OCI-LY7 (cell line): ENCODE measurements at regions of chr13 and their contacts with region 1.

Region 1: DNA sequence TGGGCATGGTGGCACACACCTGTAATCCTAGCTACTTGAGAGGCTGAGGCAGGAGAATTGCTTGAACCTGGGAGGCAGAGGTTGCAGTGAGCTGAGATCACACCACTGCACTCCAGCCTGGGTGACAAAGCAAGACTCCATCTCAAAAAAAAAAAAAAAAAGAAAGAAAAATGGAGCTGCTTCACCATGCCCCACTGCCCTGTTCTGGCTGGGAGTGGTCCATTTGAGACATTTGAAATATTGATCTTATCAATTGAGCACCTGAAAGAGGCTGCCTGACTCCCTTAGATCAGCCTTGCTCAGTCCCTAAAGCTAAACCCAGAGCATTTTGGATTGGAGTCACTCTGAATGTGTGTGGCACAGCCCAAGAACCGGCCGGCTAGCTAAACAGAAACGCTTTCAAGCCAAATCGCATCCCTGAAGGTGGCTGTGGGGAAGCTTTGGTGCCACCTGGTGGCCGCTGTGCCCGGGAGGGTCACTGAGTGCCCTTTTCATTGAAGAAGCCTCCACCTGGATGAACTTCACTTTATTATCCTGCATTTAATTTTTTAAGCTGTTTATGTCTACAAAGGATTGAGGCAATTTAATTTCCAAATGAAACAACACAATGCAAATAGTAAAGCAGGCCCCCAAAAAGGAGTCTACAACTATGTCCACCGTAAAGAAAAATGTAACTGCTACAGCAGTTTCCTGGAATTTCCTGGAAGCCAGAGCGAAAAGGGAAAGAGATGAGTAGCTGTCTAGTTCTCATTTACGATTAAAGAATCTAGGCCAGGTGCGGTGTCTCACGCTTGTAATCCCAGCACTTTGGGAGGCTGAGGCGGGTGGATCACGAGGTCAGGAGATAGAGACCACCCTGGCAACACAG is 53.1 kb upstream of the SERPINE3 start:
- DNase-seq: peak; percentile 78
- H3K4me3 ChIP-seq: no peak overlapping the region
- H3K27ac ChIP-seq: no peak overlapping the region
- H3K4me1 ChIP-seq: no peaks in the 10 kb centered on the region
- CTCF ChIP-seq: peak; percentile 98

Region 2: DNA sequence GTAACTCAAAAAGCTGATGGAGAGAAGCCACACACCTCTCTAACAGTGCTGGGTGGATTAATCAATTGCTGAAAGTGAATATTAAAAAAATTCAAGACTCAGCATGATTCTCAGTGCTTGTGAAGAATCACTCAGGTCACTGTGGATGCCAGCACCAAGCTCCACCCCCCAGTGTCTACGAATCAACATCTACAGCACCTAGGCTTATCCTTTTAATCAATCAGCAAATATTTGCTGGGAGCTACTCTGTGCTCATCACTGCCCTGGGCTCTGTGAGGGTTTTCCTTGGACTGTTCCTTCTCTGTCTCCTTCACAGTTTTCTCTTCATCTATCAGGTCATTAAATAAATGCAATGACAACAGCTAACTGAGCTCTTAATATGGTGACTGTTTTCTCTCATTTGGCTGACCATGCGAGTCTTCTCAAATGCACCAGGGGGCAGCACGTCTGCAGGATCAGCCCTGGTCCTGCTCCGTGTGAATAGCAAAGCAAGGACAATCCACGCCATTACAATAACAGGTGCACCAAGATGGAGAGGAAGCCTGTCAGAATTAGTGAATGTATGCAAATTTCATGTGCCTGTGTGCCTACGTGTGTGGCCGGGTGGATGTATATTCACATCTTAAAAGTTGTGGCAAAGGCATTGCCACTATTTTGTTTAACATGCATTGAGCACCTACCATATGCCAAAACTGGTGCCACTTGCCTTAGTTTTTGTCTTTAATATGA is 160.7 kb before region 1 on chr13:
- CTCF ChIA-PET with region 1: interaction called, 18 read pairs
- POLR2A ChIA-PET with region 1: interaction called, 4 read pairs
- intact Hi-C with region 1: loop called (anchors 1 kb)
- DNase-seq: peak; percentile 76
- H3K4me3 ChIP-seq: no peak overlapping the region
- H3K27ac ChIP-seq: no peak overlapping the region
- H3K4me1 ChIP-seq: no peaks in the 10 kb centered on the region
- CTCF ChIP-seq: peak; percentile 92

Region 3: DNA sequence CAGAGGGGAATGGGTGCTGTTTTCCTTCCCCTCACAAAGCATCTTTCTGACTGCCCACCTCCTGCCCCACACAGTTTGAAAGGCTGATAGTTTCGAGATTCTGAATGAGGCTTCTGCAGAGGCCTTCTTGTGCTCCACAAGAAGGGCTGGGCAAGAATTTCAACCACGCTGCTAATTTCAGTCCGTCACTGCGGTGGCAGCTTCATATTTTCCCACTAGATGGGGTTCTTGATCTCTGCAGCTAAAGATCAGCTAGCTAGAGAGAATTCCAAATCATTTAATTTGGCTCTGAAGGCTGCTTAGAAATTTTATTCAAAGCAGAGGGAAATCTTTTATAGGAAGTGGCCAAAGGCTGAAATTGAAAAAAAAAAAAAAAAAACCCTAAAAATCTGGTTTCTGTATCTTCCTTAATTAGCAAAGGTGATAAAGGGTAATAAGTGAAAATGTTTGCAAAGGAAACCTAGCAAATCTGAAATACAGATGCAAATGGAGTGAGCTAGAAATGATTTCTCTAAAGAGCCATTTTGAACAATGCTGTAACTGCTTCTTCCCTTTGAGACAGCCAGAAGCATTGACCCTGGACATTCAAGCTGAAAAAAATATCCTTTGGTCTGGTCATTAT is 137.3 kb before region 1 on chr13:
- CTCF ChIA-PET with region 1: interaction called, 4 read pairs
- POLR2A ChIA-PET with region 1: interaction called, 3 read pairs
- intact Hi-C with region 1: loop called (anchors 1 kb)
- DNase-seq: peak; percentile 16
- H3K4me3 ChIP-seq: no peak overlapping the region
- H3K27ac ChIP-seq: no peak overlapping the region
- H3K4me1 ChIP-seq: no peaks in the 10 kb centered on the region
- CTCF ChIP-seq: peak; percentile 68

Region 4: DNA sequence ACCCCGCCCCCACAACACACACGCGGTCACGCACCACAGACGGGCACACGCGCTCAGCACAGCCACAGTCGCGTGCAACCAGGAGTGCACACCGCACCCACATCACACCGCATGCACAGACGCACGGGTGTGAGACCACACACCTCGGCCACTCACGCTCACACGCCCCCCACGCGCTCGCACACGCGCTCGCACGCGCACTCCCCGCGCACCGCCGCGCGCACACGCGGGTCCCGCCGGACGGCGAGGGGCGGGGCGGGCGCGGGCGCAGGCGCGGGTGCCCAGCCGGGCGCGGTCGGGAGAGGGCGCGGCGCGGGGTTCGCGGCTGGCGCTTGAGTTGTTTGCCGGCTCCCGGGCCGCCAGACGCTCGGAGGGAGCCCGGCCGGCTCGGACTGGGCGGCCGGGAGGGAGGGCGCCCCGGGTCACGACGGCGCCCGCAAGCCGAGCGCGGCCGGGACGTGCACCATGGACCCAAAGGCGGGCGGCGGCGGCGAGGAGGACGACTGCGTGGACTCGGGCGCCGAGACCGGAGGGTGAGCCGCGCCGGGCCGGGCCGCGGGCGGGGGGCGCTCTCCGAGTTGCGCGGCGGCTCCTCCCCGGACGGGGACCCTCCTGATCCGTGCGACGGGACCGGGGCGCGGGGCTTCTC is 64.2 kb before region 1 on chr13 and contains the start of gene FAM124A:
- CTCF ChIA-PET with region 1: no interaction called
- POLR2A ChIA-PET with region 1: no interaction called
- intact Hi-C with region 1: loop called (anchors 5 kb)
- DNase-seq: peak; percentile 43
- H3K4me3 ChIP-seq: peak within 1 kb of the TSS; percentile 68
- H3K27ac ChIP-seq: no peak within 1 kb of the TSS
- H3K4me1 ChIP-seq: peaks cover 5% of the 10 kb centered on the region
- CTCF ChIP-seq: 0 out of 2 replicates have a peak, but pooled peaks have one; percentile 16
- total RNA-seq, gene FAM124A: not detected in 2 replicates

Region 5: GRCh38 chr13:51308781-51309180 is 22.4 kb after region 1 on chr13:
- CTCF ChIA-PET with region 1: no interaction called
- POLR2A ChIA-PET with region 1: interaction called, 11 read pairs
- intact Hi-C with region 1: no loop called
- DNase-seq: no peak
- H3K4me3 ChIP-seq: no peak overlapping the region
- H3K27ac ChIP-seq: no peak overlapping the region
- H3K4me1 ChIP-seq: no peaks in the 10 kb centered on the region
- CTCF ChIP-seq: no peak

Region 6: DNA sequence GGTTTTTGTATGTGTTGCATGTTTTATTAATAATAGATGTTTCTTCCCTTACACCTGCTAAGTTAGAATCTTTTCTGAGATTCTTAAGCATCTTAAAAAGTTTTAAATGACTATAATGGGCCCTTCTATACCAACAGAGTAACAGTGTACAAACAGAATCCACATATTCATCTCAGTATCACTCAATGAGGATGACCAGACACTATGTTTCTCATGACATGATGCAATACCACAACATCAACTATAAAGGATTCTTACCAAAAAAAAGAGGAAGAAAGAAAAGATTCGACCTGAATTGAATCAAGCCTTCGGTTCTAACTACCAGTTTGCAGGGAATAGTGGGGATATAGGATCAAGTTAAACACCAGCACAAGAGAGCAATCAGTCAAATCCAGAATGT is 110.0 kb after region 1 on chr13:
- CTCF ChIA-PET with region 1: no interaction called
- POLR2A ChIA-PET with region 1: no interaction called
- intact Hi-C with region 1: no loop called
- DNase-seq: peak; percentile 65
- H3K4me3 ChIP-seq: no peak overlapping the region
- H3K27ac ChIP-seq: peak overlapping the region; percentile 4
- H3K4me1 ChIP-seq: peaks cover 16% of the 10 kb centered on the region
- CTCF ChIP-seq: no peak

Region 7: DNA sequence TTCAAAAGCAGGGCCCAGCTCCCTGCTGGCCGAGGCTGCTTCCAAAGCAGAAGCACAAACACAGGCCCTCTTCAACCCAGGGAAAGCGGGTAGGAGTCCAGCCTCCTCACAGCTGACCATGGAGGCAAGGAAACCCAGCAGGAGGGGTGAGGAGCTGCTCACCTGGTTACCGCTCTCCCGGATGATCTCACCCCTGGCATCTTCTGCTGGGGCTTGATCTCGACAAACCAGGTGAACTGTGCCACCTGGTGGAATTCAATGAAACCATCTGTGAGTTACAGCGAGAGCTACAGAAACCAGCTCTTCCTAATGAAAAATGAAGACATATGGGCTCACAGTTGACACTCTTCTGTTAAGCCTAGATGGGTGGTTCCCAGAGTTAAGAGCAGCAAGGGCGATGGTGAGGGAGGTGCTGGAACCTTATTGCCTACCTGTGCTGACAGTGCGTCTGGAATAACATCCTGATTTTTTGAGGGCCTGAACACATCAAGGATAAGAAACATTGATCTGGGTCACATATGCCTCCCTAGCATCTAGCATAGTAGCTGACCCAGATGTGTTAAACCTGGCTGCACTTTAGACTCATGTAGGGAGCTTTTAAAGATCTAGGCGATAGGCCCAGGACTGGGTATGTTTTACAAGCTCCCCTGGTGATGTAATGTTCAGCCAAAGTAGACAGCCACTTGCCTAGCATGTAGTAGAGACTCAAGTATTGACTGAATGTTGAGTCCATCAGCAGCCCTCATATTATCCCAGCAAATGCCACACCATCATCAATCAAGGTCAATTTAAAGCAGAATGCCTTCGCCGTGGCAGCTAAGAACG is 511.5 kb after region 1 on chr13:
- CTCF ChIA-PET with region 1: interaction called, 3 read pairs
- POLR2A ChIA-PET with region 1: no interaction called
- intact Hi-C with region 1: loop called (anchors 1 kb)
- DNase-seq: peak; percentile 84
- H3K4me3 ChIP-seq: no peak overlapping the region
- H3K27ac ChIP-seq: no peak overlapping the region
- H3K4me1 ChIP-seq: peaks cover 88% of the 10 kb centered on the region
- CTCF ChIP-seq: peak; percentile 82